HCT116 (cell line): ENCODE measurements at regions of chr13 and their contacts with region 1.

Region 1: GRCh38 chr13:74148352-74148751 is 14.1 kb upstream of the KLF12 start:
- DNase-seq: no peak
- ATAC-seq: no peak
- H3K4me3 ChIP-seq: no peak overlapping the region
- H3K27ac ChIP-seq: no peak overlapping the region
- H3K4me1 ChIP-seq: no peaks in the 10 kb centered on the region
- H3K27me3 ChIP-seq: no peaks in the 10 kb centered on the region
- CTCF ChIP-seq: no peak
- POLR2A ChIP-seq: no peak
- RAD21 ChIP-seq: no peak

Region 2: GRCh38 chr13:74162135-74162534 is 13.8 kb after region 1 on chr13:
- CTCF ChIA-PET with region 1: no interaction called
- POLR2A ChIA-PET with region 1: no interaction called
- RAD21 ChIA-PET with region 1: no interaction called
- intact Hi-C with region 1: loop called (anchors 2 kb)
- DNase-seq: no peak
- ATAC-seq: no peak
- H3K4me3 ChIP-seq: no peak overlapping the region
- H3K27ac ChIP-seq: no peak overlapping the region
- H3K4me1 ChIP-seq: no peaks in the 10 kb centered on the region
- H3K27me3 ChIP-seq: no peaks in the 10 kb centered on the region
- CTCF ChIP-seq: no peak
- POLR2A ChIP-seq: no peak
- RAD21 ChIP-seq: no peak